A673 (cell line): ENCODE measurements at regions of chr7 and their contacts with region 1.

Region 1: DNA sequence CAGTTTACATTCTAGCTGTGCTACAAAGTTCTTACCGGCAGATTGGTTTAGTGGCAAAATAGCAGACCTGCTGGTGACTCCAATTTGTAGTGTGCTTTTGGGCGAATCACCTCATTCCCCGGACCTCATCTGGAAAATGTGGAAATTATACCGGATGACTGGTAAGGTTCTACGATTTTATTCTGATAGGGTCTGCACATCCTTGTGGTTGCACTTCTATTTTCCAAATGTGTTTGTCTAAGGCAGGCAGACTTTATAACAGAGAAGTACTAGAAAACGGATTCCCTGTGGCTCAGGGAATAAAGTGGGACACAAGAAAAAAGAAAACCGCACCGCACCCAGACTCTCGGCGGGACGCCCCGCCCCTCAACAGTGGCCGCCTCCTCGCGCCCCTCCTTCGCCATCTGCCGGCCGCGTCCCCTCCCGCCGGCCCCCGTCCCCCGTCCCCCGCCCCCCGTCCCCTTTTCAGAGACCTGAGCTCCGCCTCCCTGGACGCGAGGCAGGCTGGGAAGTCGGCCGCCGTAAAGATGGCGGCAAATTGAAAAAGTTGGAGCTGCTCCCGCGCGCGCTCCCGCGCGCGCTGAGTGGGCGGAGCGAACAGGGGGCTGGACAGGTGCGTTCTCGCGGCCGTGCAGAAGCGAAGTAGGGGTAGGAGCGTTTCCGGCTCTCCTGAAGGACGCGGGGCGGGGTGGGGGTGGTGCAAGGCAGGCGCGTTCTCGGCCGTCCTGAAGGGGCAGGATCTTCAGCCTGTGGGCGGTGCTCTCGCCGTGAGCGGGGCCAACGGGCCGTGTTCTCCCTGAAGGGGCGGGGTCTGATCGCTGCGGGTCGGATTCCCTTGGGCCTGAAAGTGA is 531 bp upstream of the CCM2 start:
- DNase-seq: peak; percentile 100
- H3K4me3 ChIP-seq: peak overlapping the region; percentile 60
- H3K27ac ChIP-seq: peak overlapping the region; percentile 76
- H3K4me1 ChIP-seq: peaks cover 6% of the 10 kb centered on the region
- H3K27me3 ChIP-seq: no peaks in the 10 kb centered on the region
- CTCF ChIP-seq: no peak

Region 2: GRCh38 chr7:45111298-45112223 is 112.1 kb after region 1 on chr7 and contains the start of gene TBRG4:
- CTCF ChIA-PET with region 1: no interaction called
- POLR2A ChIA-PET with region 1: no interaction called
- intact Hi-C with region 1: loop called (anchors 5 kb)
- DNase-seq: peak; percentile 97
- H3K4me3 ChIP-seq: peak within 1 kb of the TSS; percentile 86
- H3K27ac ChIP-seq: peak within 1 kb of the TSS; percentile 84
- H3K4me1 ChIP-seq: peaks cover 7% of the 10 kb centered on the region
- H3K27me3 ChIP-seq: peaks cover 4% of the 10 kb centered on the region
- CTCF ChIP-seq: peak; percentile 55
- total RNA-seq, gene TBRG4: 127 and 136 TPM in 2 replicates